ENCODE measurements at regions of chr9 and their contacts with region 1.

Region 1: GRCh38 chr9:93962561-93963440 is 7.6 kb upstream of the BARX1 start:
- DNase-seq: peak; percentile 70
- ATAC-seq: peak; percentile 16; the same call in 1 of the 2 replicates
- H3K4me3 Mint-ChIP-seq: no peak overlapping the region
- H3K27ac Mint-ChIP-seq: no peak overlapping the region
- H3K4me1 Mint-ChIP-seq: peaks cover 30% of the 10 kb centered on the region
- H3K27me3 Mint-ChIP-seq: peaks cover 53% of the 10 kb centered on the region
- CTCF ChIP-seq: peak; percentile 88

Region 2: DNA sequence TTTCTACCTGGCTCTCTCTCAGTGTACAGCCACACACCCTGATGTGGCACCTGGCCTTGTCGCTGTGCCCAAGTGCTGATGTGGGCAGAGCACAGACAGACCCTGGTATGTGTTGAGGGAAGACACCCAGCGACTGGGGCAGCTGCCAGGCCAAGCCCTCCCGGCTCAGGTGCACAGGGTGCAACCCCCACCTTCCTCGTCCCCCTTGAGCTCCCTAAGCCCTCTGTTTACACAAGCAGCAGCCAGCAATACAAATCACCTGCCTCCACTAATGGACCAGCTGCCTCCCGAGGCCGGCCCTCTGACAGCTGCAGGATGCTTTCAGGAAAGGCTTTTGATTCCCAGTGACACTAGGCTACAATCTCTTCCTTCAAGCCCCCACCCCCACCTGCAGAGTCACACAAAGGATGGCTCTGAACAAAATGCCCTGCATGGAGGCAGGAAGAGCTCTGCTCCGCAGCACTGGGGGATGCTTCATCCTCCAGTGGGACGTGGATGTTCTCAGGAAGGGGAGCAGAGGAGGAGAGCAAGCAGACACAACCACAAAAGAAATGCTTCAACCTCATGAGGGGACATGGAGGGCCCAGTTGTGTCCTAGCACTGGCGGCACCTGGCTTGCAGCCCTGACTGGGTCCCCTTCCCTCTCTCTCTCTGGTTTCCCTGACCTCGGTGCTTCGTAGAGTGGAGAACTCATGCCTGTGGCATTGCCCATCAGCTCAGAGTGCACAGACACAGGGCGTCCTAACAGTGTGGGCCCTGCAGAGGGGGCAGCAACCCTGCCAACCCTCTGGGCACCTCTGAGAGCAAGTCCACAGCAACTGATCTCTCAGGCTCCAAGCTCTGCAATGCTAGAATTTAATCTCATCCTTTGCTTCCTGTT is 148.5 kb before region 1 on chr9:
- CTCF ChIA-PET with region 1: interaction called, 16 read pairs
- POLR2A ChIA-PET with region 1: no interaction called
- DNase-seq: no peak
- ATAC-seq: peak; percentile 59
- H3K4me3 Mint-ChIP-seq: no peak overlapping the region
- H3K27ac Mint-ChIP-seq: no peak overlapping the region
- H3K4me1 Mint-ChIP-seq: peaks cover 37% of the 10 kb centered on the region
- H3K27me3 Mint-ChIP-seq: no peaks in the 10 kb centered on the region
- CTCF ChIP-seq: no peak

Region 3: DNA sequence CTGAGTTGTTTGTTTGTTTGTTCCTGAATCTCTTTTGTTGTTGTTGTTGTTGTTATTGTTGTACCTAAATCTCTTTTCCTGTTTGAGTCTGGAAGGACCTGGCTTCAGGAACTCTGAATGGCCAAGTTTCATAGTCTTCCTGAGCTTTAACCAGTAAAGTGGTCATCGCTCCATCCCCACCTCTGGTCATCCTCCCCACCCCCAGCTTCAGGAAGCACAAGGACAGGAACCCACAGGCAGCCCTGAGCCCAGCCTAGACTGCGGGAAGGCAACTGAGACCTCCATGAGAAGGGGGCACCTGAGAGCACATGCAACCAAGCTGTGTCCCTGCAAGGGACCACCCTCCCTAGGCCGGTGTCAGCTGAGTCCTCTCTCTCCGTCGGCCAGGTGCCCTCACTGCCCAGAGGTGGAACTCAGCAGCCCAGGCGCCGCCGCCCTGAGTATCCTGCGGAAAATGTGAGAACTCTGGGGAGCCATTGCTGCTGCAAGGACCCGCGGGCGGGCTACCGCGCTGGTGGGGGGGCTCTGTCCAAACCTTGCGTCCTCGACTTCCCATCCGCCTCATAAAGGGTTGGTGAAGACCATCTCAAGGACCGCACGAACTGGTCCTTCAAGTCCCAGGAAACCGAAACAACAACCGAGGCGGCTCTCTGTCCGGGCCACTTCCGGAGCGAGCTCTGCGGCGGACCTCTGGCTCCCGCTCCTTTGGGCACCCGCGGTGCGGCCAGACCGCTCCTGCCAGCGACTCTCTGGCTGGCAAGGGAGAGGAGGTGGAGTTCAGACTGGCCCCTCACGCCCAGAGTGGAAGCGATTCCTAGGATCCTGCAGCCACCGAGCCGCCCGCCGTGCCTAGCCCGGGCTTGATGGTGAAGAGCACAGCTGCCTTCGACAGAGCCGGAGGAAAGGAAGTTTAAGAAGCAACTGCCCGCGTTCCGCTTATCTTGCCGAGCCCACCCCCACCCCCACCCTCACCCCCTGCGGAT is 11.9 kb before region 1 on chr9:
- CTCF ChIA-PET with region 1: interaction called, 14 read pairs
- POLR2A ChIA-PET with region 1: interaction called, 7 read pairs
- DNase-seq: peak; percentile 62
- ATAC-seq: peak; percentile 2; the same call in 1 of the 2 replicates
- H3K4me3 Mint-ChIP-seq: peak overlapping the region; percentile 69
- H3K27ac Mint-ChIP-seq: no peak overlapping the region
- H3K4me1 Mint-ChIP-seq: peaks cover 67% of the 10 kb centered on the region
- H3K27me3 Mint-ChIP-seq: peaks cover 93% of the 10 kb centered on the region
- CTCF ChIP-seq: no peak

Region 4: DNA sequence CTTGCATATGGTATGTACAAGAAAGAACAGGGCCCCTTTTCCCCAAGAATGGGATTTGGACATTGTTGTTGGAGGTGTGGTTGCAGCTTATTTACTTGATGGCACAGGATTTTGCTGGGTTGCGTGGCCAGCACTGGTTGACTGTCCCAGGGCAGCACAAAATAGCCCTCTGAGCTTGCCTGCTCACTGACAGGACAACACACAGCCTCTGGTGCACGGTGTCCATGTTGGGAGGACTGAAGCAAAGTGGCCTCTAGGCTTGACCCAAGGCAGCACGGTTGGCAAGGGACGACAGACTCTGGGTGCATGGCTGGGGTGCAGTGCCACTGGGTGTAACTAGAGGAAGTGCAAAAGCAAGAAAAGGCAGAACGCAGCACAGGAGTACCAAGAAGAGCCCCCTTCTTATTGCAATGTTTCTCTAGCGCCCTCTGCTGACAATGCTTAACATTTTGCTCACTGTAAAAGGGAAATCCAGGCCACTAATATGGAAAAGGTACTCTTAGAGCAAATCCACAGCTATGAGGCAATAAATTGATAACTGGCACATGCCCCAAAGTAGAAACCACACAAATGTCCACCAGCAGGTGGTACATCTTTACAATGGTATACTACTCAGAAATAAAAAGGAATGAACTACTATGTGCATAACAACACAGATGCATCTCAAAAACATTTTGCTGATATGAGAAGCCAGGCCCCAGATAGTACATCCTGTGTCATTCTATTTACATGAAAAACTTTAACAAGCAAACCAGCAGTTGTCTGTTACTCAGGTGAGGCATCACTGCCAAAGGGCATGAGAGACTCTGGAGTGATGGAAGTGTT is 39.7 kb after region 1 on chr9:
- CTCF ChIA-PET with region 1: interaction called, 44 read pairs
- POLR2A ChIA-PET with region 1: no interaction called
- DNase-seq: peak; percentile 56
- ATAC-seq: peak; percentile 93
- H3K4me3 Mint-ChIP-seq: no peak overlapping the region
- H3K27ac Mint-ChIP-seq: no peak overlapping the region
- H3K4me1 Mint-ChIP-seq: 0 out of 2 replicates have a peak, but pooled peaks cover 2% of the 10 kb centered on the region
- H3K27me3 Mint-ChIP-seq: no peaks in the 10 kb centered on the region; the same call in 1 of the 2 replicates
- CTCF ChIP-seq: peak; percentile 66; the same call in 1 of the 2 replicates

Measured in WTC11 (cell line).